ENCODE measurements at regions of chr2 and their contacts with region 1.

Region 1: DNA sequence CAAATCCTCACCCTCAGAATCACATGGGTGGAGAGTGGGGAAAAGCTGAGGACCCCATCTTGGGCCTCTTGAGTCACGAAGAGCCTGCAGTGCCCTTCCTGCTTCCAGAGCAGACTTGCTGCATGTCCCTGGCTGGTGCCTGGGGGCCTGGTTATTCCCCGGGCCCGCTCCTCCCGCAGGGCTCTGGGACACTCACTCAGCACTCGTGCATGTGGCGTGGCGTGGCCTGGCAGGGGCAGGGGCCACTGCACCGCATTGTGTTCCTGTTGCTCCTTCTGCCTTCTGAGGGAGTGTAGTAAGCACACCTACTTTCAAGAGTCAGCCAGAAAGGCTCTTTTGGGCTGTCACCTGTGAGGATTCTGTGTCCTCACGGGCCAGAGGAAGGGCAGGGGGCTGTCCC is 17.4 kb upstream of the MZT2A start:
- DNase-seq: no peak
- ATAC-seq: no peak
- H3K4me3 Mint-ChIP-seq: no peak overlapping the region
- H3K27ac Mint-ChIP-seq: no peak overlapping the region
- H3K4me1 Mint-ChIP-seq: peaks cover 12% of the 10 kb centered on the region
- H3K27me3 Mint-ChIP-seq: no peaks in the 10 kb centered on the region

Region 2: GRCh38 chr2:131492418-131493198 is 17.0 kb before region 1 on chr2:
- POLR2A ChIA-PET with region 1: interaction called, 41 read pairs
- DNase-seq: peak; percentile 97
- ATAC-seq: peak; percentile 85
- H3K4me3 Mint-ChIP-seq: peak overlapping the region; percentile 97
- H3K27ac Mint-ChIP-seq: peak overlapping the region; percentile 99
- H3K4me1 Mint-ChIP-seq: peaks cover 34% of the 10 kb centered on the region
- H3K27me3 Mint-ChIP-seq: no peaks in the 10 kb centered on the region